ENCODE measurements at regions of chr11 and their contacts with region 1.

Region 1: GRCh38 chr11:31107062-31107461 is 262.5 kb downstream of the DCDC1 start:
- DNase-seq: peak; percentile 95
- H3K4me3 ChIP-seq: no peak overlapping the region
- H3K27ac ChIP-seq: no peak overlapping the region
- H3K4me1 ChIP-seq: peaks cover 29% of the 10 kb centered on the region
- H3K27me3 ChIP-seq: no peaks in the 10 kb centered on the region
- CTCF ChIP-seq: peak; percentile 100

Region 2: GRCh38 chr11:31240338-31240904 is 133.4 kb after region 1 on chr11:
- CTCF ChIA-PET with region 1: interaction called, 20 read pairs
- POLR2A ChIA-PET with region 1: interaction called, 3 read pairs
- intact Hi-C with region 1: no loop called
- DNase-seq: peak; percentile 91
- H3K4me3 ChIP-seq: no peak overlapping the region
- H3K27ac ChIP-seq: no peak overlapping the region
- H3K4me1 ChIP-seq: peaks cover 20% of the 10 kb centered on the region
- H3K27me3 ChIP-seq: no peaks in the 10 kb centered on the region
- CTCF ChIP-seq: peak; percentile 99

Region 3: GRCh38 chr11:31397239-31397834 is 290.3 kb after region 1 on chr11:
- CTCF ChIA-PET with region 1: interaction called, 7 read pairs
- POLR2A ChIA-PET with region 1: no interaction called
- intact Hi-C with region 1: loop called (anchors 5 kb)
- DNase-seq: peak; percentile 69
- H3K4me3 ChIP-seq: no peak overlapping the region
- H3K27ac ChIP-seq: no peak overlapping the region
- H3K4me1 ChIP-seq: no peaks in the 10 kb centered on the region
- H3K27me3 ChIP-seq: no peaks in the 10 kb centered on the region
- CTCF ChIP-seq: peak; percentile 99

Region 4: DNA sequence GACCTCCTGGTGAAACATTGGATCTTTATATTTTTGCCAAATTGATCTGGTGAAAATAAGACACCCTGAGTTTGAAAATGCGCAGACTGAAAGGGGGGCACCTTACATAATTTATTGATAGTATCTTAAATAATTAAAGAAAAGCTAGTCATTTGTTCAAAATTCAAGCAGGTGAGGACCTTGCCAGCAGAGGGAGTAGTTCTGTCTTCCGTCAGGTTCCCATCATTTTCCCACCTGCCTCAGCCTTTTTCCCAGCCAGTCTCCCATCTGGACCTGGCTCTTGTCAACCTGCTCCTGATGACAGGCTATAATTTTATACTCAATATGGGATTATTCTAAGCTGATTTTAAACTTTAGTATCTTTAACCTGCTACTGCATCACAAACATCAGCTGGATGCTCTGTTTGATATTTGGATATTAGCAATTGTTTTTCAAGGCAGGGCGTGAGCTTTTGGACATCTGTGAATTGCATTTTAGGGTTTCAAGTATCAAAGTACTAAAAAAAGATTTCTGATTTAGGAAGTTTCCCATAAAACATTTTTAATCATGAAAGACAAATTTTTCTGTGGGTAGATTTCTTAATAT is 534.5 kb after region 1 on chr11:
- CTCF ChIA-PET with region 1: no interaction called
- POLR2A ChIA-PET with region 1: no interaction called
- intact Hi-C with region 1: loop called (anchors 10 kb)
- DNase-seq: peak; percentile 74
- H3K4me3 ChIP-seq: no peak overlapping the region
- H3K27ac ChIP-seq: no peak overlapping the region
- H3K4me1 ChIP-seq: peaks cover 11% of the 10 kb centered on the region
- H3K27me3 ChIP-seq: no peaks in the 10 kb centered on the region
- CTCF ChIP-seq: peak; percentile 99

Region 5: DNA sequence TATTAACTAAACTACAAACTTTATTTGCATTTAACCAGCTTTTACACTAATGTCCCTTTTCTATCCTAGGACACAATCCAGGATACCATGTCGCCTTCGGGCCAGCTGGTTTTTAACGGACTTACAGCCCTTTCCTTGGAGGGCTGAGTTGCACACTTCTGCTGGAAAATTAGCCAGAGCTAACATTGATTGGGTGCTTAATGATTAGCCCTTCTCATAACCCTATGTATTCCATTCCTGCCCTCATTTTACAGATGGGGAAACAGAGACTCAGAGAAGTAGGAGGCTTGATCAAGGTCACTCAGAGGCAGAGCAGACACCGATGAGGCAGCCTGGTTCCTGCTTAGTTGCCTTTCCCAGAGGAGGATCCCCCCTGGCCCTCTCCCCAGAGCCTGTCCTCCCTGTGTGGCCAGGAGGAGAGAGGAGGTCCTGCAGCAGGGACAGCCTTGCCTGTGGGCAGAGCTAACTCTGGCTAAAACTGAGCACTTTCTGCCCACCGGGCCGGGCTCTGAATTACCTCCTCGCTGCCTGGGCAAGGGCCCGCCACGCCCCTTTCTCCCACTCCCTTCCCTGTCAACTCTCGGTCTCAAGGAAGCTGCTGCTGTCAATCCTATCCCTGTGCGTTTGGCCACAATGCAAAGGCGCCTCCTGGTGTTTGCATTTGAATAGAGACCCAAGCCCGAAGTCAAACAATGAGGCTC is 763.7 kb after region 1 on chr11:
- CTCF ChIA-PET with region 1: interaction called, 24 read pairs
- POLR2A ChIA-PET with region 1: no interaction called
- intact Hi-C with region 1: loop called (anchors 1 kb)
- DNase-seq: peak; percentile 96
- H3K4me3 ChIP-seq: no peak overlapping the region
- H3K27ac ChIP-seq: no peak overlapping the region
- H3K4me1 ChIP-seq: no peaks in the 10 kb centered on the region
- H3K27me3 ChIP-seq: peaks cover 63% of the 10 kb centered on the region
- CTCF ChIP-seq: peak; percentile 100

Region 6: GRCh38 chr11:32006799-32007388 is 899.8 kb after region 1 on chr11:
- CTCF ChIA-PET with region 1: interaction called, 6 read pairs
- POLR2A ChIA-PET with region 1: no interaction called
- intact Hi-C with region 1: loop called (anchors 5 kb)
- DNase-seq: peak; percentile 89
- H3K4me3 ChIP-seq: no peak overlapping the region
- H3K27ac ChIP-seq: no peak overlapping the region
- H3K4me1 ChIP-seq: no peaks in the 10 kb centered on the region
- H3K27me3 ChIP-seq: peaks cover 91% of the 10 kb centered on the region
- CTCF ChIP-seq: peak; percentile 100

Measured in A673 (cell line).